Naive thymus-derived CD4-positive, alpha-beta T cell (primary cell): ENCODE measurements at regions of chr6 and their contacts with region 1.

Region 1: GRCh38 chr6:35737413-35738211 is 780 bp downstream of the ARMC12 start:
- DNase-seq: peak in 7 of 9 donors; percentile 60 to 80 (median 73)
- ATAC-seq: peak; percentile 83
- H3K4me3 ChIP-seq: no peak overlapping the region
- H3K4me3 Mint-ChIP-seq: peak overlapping the region in 8 of 10 donors; percentile 51 to 75 (median 62)
- H3K27ac ChIP-seq: peak overlapping the region; percentile 22
- H3K27ac Mint-ChIP-seq: peak overlapping the region; percentile 28 to 98 (median 90)
- H3K4me1 ChIP-seq: peaks cover 31 to 51% of the 10 kb centered on the region in 2 donors
- H3K4me1 Mint-ChIP-seq: peaks cover 21 to 50% (median 42%) of the 10 kb centered on the region in 7 donors
- H3K27me3 ChIP-seq: no peaks in the 10 kb centered on the region
- H3K27me3 Mint-ChIP-seq: no peaks in the 10 kb centered on the region

Region 2: GRCh38 chr6:35259948-35260590 is 477.5 kb before region 1 on chr6:
- CTCF ChIA-PET with region 1: no interaction called
- POLR2A ChIA-PET with region 1: no interaction called
- intact Hi-C with region 1: no loop called
- DNase-seq: peak in 8 of 9 donors; percentile 53 to 87 (median 62)
- ATAC-seq: peak; percentile 74
- H3K4me3 ChIP-seq: peak overlapping the region; percentile 65
- H3K4me3 Mint-ChIP-seq: peak overlapping the region; percentile 85 to 99 (median 92)
- H3K27ac ChIP-seq: peak overlapping the region; percentile 95
- H3K27ac Mint-ChIP-seq: peak overlapping the region; percentile 89 to 99 (median 97)
- H3K4me1 ChIP-seq: peaks cover 15 to 17% of the 10 kb centered on the region in 2 donors
- H3K4me1 Mint-ChIP-seq: peaks cover 40 to 69% (median 54%) of the 10 kb centered on the region in 7 donors
- H3K27me3 ChIP-seq: no peaks in the 10 kb centered on the region
- H3K27me3 Mint-ChIP-seq: no peaks in the 10 kb centered on the region

Region 3: GRCh38 chr6:35318196-35319171 is 419.1 kb before region 1 on chr6:
- CTCF ChIA-PET with region 1: no interaction called
- POLR2A ChIA-PET with region 1: no interaction called
- intact Hi-C with region 1: no loop called
- DNase-seq: no peak
- ATAC-seq: no peak
- H3K4me3 ChIP-seq: no peak overlapping the region
- H3K4me3 Mint-ChIP-seq: no peak overlapping the region
- H3K27ac ChIP-seq: no peak overlapping the region
- H3K27ac Mint-ChIP-seq: peak overlapping the region in 7 of 9 donors; percentile 36 to 99 (median 56)
- H3K4me1 ChIP-seq: peaks cover 13 to 24% of the 10 kb centered on the region in 2 donors
- H3K4me1 Mint-ChIP-seq: peaks cover 32 to 69% (median 57%) of the 10 kb centered on the region in 7 donors
- H3K27me3 ChIP-seq: no peaks in the 10 kb centered on the region
- H3K27me3 Mint-ChIP-seq: no peaks in the 10 kb centered on the region

Region 4: DNA sequence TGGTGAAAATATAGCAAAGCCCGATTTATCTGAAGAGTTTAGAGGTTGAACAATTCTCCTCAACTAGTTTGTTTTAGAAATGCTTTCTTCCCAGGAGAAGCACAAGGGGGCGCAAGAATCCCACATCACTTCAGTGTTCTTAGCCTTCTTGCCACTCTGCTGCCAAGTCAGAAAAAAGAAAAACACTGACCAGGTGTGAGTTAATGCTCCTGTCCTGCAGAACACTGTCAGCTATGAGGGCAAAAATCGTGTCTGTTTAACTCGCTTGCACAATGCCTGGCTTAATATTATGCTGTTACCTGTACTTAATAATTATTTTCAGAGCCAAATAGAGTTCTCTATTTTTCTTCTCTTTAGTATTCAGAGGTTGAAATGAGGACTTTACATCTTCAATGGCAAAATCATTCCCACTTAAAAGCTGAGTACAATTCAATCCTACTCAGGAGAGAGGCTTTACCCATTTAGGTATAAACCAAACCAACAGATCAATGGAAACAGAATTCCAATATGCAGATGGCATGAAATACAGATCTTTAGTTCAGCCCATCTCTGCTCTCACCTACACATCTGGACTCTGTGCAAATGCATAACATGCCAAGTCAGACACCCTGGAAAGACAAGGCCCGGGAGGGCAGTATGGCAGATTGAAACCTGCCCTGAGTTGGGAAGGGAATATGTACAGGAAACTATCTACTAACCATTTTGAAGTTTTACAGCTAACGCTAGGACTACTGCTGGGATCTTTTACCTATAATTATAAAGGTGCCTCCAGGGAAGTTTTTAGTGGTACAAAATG is 153.5 kb before region 1 on chr6:
- CTCF ChIA-PET with region 1: interaction called, 141 read pairs
- POLR2A ChIA-PET with region 1: interaction called, 24 read pairs
- intact Hi-C with region 1: loop called (anchors 1 kb)
- DNase-seq: peak; percentile 43 to 81 (median 75)
- ATAC-seq: peak; percentile 84
- H3K4me3 ChIP-seq: no peak overlapping the region
- H3K4me3 Mint-ChIP-seq: peak overlapping the region in 8 of 10 donors; percentile 16 to 62 (median 46)
- H3K27ac ChIP-seq: peak overlapping the region; percentile 16
- H3K27ac Mint-ChIP-seq: peak overlapping the region; percentile 38 to 94 (median 92)
- H3K4me1 ChIP-seq: peaks cover 7 to 57% of the 10 kb centered on the region in 2 donors
- H3K4me1 Mint-ChIP-seq: peaks cover 31 to 92% (median 79%) of the 10 kb centered on the region in 7 donors
- H3K27me3 ChIP-seq: no peaks in the 10 kb centered on the region
- H3K27me3 Mint-ChIP-seq: no peaks in the 10 kb centered on the region

Region 5: GRCh38 chr6:37418722-37419121 is 1681.1 kb after region 1 on chr6:
- CTCF ChIA-PET with region 1: no interaction called
- POLR2A ChIA-PET with region 1: no interaction called
- intact Hi-C with region 1: no loop called
- DNase-seq: no peak
- ATAC-seq: no peak
- H3K4me3 ChIP-seq: no peak overlapping the region
- H3K4me3 Mint-ChIP-seq: no peak overlapping the region
- H3K27ac ChIP-seq: no peak overlapping the region
- H3K27ac Mint-ChIP-seq: no peak overlapping the region
- H3K4me1 ChIP-seq: no peaks in the 10 kb centered on the region
- H3K4me1 Mint-ChIP-seq: no peaks in the 10 kb centered on the region
- H3K27me3 ChIP-seq: no peaks in the 10 kb centered on the region
- H3K27me3 Mint-ChIP-seq: peaks cover 0 to 13% (median 8%) of the 10 kb centered on the region in 5 donors